ENCODE measurements at regions of chr16 and their contacts with region 1.

Region 1: GRCh38 chr16:30445408-30446202 is at the start of gene SEPHS2:
- DNase-seq: peak; percentile 95 to 98 (median 98)
- H3K4me3 ChIP-seq: peak within 1 kb of the TSS; percentile 65 to 99 (median 95)
- H3K27ac ChIP-seq: peak within 1 kb of the TSS; percentile 94 to 98
- H3K4me1 ChIP-seq: peaks cover 3 to 30% (median 24%) of the 10 kb centered on the region in 4 experiments
- H3K27me3 ChIP-seq: no peaks in the 10 kb centered on the region

Region 2: DNA sequence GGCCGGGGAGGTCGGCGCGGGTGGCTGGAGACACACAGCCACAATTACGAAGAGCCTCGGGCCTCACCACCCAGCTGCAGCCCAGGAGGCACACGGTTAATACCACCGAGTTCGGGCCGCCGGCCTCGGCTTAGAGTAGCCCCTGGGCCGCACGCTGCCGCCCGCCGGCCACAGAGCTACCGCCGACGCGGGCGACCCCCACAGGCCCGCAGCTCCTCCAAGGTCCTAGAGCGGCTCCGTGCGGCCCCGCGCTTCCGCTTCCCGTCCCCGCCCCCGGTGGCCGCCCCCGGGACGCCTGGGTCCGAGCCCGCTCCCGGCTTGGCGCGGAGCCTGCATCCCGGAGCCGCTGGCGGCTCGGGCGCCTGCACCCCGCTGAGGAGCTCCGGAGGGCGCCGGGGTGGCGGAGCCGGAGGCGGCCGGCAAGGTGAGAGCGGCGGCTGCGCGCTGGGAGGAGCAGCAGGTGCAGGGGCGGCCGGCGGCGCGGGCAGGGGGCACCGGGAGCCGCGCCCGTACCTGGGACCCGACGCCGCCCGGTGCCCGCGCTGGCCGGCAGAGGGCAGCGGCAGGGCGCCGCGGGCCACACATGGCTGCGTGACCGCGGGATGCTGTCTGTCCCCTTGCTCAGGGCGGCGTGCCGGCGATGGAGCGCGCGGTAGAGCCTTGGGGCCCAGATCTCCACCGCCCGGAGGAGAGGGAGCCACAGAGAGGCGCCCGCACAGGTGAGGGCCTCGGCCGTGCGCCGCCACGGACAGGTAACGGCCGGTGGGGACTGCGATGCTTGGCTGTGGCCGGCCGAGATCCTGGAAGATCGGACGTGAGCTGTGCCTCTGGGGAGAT is 50.2 kb before region 1 on chr16 and contains the start of gene ZNF48:
- CTCF ChIA-PET with region 1: no interaction called
- POLR2A ChIA-PET with region 1: no interaction called
- DNase-seq: peak; percentile 80 to 88 (median 86)
- H3K4me3 ChIP-seq: peak within 1 kb of the TSS; percentile 74 to 91 (median 77)
- H3K27ac ChIP-seq: peak within 1 kb of the TSS; percentile 33 to 71
- H3K4me1 ChIP-seq: peaks cover 7 to 41% (median 36%) of the 10 kb centered on the region in 4 experiments
- H3K27me3 ChIP-seq: no peaks in the 10 kb centered on the region

Region 3: GRCh38 chr16:30429678-30430427 is 15.8 kb before region 1 on chr16 and contains the start of gene DCTPP1:
- CTCF ChIA-PET with region 1: interaction called, 15 read pairs
- POLR2A ChIA-PET with region 1: no interaction called
- DNase-seq: peak; percentile 100
- H3K4me3 ChIP-seq: peak within 1 kb of the TSS; percentile 36 to 89 (median 82)
- H3K27ac ChIP-seq: peak within 1 kb of the TSS; percentile 46 to 76
- H3K4me1 ChIP-seq: peaks cover 3 to 21% (median 16%) of the 10 kb centered on the region in 4 experiments
- H3K27me3 ChIP-seq: no peaks in the 10 kb centered on the region

Region 4: GRCh38 chr16:30458561-30459394 is 13.2 kb after region 1 on chr16:
- CTCF ChIA-PET with region 1: interaction called, 37 read pairs
- POLR2A ChIA-PET with region 1: interaction called, 3 read pairs
- DNase-seq: peak; percentile 94 to 99 (median 99)
- H3K4me3 ChIP-seq: peak overlapping the region in 2 of 7 experiments; percentile 31 to 60
- H3K27ac ChIP-seq: peak overlapping the region; percentile 88 to 91
- H3K4me1 ChIP-seq: peaks cover 13 to 67% (median 39%) of the 10 kb centered on the region in 4 experiments
- H3K27me3 ChIP-seq: no peaks in the 10 kb centered on the region

Region 5: DNA sequence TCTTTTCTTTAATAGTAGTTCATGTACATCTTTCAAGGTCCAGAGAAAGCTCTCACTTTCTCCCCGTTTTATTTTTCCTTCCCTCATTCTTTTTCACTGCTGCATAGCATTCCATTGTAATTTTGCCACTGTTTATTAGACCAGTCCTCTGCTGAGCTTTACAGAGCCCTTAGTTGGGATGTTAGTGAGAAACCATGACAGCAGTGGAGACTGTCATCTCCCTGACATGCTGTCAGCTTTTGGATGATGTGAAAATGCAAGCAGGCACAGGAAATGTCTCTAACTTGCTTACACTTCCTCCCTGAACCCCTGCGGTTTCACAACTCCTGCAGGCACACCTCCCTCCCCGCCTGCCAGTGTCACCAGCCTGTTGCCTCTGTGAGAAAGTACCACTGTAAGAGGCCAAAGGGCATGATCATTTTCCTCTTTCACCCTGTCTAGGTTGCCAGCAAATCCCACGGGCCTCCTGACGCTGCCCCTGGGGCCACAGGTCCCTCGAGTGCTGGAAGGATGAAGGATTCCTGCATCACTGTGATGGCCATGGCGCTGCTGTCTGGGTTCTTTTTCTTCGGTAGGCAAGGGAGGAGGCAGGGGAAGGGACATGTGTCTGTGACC is 26.8 kb after region 1 on chr16 and contains the start of gene ITGAL:
- CTCF ChIA-PET with region 1: interaction called, 16 read pairs
- POLR2A ChIA-PET with region 1: no interaction called
- DNase-seq: peak; percentile 55 to 92 (median 87)
- H3K4me3 ChIP-seq: peak within 1 kb of the TSS in 6 of 7 experiments; percentile 38 to 79 (median 50)
- H3K27ac ChIP-seq: peak within 1 kb of the TSS; percentile 66 to 77
- H3K4me1 ChIP-seq: peaks cover 0 to 64% (median 31%) of the 10 kb centered on the region in 4 experiments
- H3K27me3 ChIP-seq: no peaks in the 10 kb centered on the region

Region 6: GRCh38 chr16:30534368-30535105 is 88.9 kb after region 1 on chr16 and contains the start of gene ZNF747:
- CTCF ChIA-PET with region 1: interaction called, 20 read pairs
- POLR2A ChIA-PET with region 1: no interaction called
- DNase-seq: peak; percentile 85 to 91 (median 90)
- H3K4me3 ChIP-seq: peak within 1 kb of the TSS; percentile 61 to 92 (median 78)
- H3K27ac ChIP-seq: peak within 1 kb of the TSS; percentile 78 to 91
- H3K4me1 ChIP-seq: peaks cover 4 to 35% (median 29%) of the 10 kb centered on the region in 4 experiments
- H3K27me3 ChIP-seq: no peaks in the 10 kb centered on the region